AG04449 (cell line): ENCODE measurements at regions of chr6 and their contacts with region 1.

Region 1: GRCh38 chr6:138007014-138007472 is 100.2 kb downstream of the PERP start:
- DNase-seq: no peak
- H3K4me3 ChIP-seq: no peak overlapping the region
- CTCF ChIP-seq: peak; percentile 61

Region 2: DNA sequence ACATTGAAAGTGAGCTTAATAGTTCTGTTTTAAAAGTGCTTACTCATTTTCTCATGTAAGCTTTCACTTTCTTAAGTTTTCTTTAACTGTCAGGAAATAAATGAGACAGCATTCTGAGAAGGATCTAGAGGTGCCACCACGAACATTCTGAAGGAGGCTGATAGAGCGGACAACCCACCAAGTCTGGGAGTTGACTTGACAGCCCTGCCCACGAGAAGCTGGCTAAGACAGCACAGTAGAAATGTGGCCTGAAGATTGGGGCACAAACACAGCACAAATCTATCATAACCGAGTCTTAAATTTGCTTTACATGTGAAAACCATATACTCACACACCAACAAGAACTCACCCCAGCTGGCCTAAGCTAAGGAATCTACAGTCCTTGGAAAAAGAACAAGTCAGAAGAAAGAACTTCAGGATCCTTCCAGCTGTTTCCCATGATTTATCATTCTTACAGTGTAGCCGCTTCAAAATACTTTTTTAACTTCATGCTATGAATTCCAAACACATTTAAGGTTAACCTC is 284.2 kb before region 1 on chr6:
- CTCF ChIA-PET with region 1: no interaction called
- POLR2A ChIA-PET with region 1: no interaction called
- DNase-seq: no peak
- H3K4me3 ChIP-seq: no peak overlapping the region
- CTCF ChIP-seq: no peak

Region 3: DNA sequence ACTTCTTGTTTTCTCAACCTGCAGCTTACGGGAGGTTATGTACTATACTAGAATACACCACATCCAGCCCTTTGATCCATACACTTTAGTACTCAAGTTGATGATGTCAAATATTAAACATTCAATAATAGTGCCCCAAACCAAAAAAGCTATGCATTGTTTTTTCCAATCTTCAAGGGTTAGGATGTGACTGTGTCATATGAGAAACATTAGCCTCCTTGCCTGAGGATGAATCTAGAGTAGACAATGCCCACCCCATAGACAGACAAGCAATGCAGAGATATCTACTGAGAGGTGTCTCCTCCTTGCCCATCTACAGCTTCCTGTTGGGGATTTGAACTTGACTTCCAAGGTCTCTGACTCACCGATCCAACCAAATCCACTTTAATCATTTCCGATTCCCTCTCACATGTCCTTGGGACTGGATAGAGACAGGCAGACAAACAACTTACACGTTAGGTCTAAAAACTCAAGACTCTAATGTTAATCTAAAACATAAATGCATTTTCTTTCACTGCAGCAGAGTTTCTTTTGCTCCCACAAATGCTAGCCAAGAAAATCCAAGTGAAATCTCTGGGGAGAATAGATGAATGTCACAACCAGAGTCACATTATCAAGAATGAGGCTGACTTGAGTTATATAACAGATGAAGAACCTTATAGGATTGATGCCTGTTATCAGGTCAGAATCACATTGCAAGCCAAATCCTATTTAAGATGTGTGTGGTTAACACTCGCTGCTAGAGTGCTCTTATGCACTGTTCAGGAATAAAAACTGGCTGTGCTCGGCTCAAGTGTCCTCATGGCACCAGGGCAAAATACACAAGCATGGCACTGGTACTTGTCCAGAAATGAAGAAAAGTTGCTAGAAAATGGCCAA is 215.5 kb before region 1 on chr6:
- CTCF ChIA-PET with region 1: no interaction called
- POLR2A ChIA-PET with region 1: no interaction called
- DNase-seq: no peak
- H3K4me3 ChIP-seq: no peak overlapping the region
- CTCF ChIP-seq: no peak

Region 4: DNA sequence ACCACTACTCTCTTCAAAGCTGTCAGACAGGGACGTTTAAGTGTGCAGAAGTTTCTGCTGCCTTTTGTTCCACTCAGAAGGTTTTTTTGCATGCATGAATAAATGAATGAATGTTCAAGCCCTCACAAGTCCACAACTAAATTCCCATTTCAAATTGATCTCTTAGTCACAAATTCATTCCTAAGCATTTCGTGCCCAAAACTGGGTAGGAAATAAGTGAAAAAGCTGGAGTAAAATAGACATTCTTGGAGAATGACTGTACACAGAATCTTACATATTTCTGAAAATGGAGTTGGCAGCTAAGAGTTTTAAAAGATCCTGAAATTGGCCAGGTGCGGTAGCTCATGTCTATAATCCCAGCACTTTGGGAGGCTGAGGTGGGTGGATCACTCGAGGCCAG is 17.4 kb before region 1 on chr6:
- CTCF ChIA-PET with region 1: interaction called, 17 read pairs
- POLR2A ChIA-PET with region 1: no interaction called
- DNase-seq: no peak
- H3K4me3 ChIP-seq: no peak overlapping the region
- CTCF ChIP-seq: no peak

Region 5: DNA sequence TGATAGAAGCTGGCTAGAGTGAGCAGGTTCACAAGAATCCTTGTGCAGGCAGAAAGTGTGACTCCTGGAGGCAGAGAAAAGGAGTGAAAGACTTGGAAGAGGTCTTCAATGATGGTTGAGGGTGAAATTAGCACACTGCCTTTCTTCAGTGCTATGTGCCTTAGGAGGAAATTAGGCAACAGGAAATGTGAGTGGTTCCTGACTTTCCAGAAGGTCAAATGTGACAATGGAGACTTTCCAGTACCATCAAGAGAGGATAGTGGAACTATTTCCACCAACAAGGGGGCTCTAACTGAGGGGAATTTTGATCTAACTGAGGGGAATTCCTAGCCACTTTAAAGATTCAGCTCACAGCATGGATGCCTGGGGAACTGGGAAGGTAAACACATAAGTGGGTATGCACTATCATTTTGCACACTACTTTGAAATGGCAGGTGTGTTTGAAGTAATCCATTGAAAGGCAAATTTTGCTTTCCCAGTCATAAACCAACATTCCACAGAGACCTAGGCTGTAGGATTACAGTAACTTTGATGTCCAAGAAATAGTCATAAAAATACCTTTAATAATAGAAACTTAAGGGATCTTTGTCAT is 10.2 kb after region 1 on chr6:
- CTCF ChIA-PET with region 1: interaction called, 38 read pairs
- POLR2A ChIA-PET with region 1: no interaction called
- DNase-seq: no peak
- H3K4me3 ChIP-seq: no peak overlapping the region
- CTCF ChIP-seq: no peak